ENCODE measurements at regions of chr11 and their contacts with region 1.

Region 1: DNA sequence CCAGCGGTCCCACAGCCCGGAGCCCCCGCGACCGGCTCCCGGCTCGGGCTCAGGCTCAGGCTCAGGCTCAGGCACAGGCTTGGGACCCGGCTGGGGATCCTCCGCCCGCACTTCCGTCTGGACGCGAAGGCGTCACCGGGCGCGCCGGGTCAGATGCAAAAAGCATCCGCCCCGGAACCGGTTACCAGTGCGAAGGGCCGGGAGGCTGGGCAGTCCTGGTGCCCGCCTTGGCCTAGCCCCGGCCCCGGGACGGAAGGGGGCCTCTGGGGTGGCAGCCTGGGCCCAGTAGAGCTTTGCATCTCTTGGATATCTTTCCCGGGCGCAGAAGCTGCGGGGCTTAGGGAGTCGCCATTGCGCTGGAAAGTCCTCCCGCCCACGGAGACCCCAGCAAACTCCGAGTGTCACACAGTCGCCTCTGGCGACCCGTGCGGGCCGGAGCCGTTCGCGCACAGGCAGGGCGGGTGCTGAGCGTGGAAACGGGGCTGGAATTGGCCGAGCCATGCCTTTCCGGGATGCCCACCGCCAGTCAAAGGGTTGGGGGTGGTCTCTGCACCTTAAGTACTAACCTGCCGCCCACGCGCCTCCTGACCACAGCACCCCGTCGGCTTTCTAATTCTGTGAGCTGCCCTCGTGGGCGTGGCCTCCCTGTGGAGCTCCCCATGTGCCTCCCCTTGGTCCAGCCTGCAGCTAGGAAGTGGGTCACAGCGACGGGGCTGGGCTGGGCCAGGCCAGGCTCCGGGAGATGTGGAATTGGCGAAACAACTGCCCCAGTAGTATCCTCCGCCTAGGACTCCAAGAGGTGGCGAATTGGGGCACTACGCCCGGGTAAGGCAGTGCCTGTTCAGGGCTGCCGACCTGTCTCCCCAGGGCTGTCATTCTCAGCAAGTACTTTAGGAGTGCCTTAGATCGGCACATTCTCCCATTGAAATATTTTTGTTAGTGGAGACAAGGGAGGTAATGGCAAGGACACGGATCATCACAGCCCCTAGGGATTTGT is at the start of gene TMEM9B:
- DNase-seq: peak; percentile 92
- H3K4me3 ChIP-seq: peak within 1 kb of the TSS; percentile 90 to 96 (median 95)
- H3K27ac ChIP-seq: peak within 1 kb of the TSS; percentile 86
- H3K4me1 ChIP-seq: peaks cover 23% of the 10 kb centered on the region
- H3K27me3 ChIP-seq: no peaks in the 10 kb centered on the region
- CTCF ChIP-seq: no peak
- total RNA-seq, gene TMEM9B: 37.8 to 52.7 TPM

Region 2: GRCh38 chr11:8459711-8460394 is 504.8 kb before region 1 on chr11:
- CTCF ChIA-PET with region 1: no interaction called
- dilution Hi-C with region 1: no loop called
- in situ Hi-C with region 1: no loop called
- intact Hi-C with region 1: no loop called
- DNase-seq: no peak
- H3K4me3 ChIP-seq: no peak overlapping the region
- H3K27ac ChIP-seq: no peak overlapping the region
- H3K4me1 ChIP-seq: no peaks in the 10 kb centered on the region
- H3K27me3 ChIP-seq: peaks cover 5% of the 10 kb centered on the region
- CTCF ChIP-seq: no peak

Region 3: DNA sequence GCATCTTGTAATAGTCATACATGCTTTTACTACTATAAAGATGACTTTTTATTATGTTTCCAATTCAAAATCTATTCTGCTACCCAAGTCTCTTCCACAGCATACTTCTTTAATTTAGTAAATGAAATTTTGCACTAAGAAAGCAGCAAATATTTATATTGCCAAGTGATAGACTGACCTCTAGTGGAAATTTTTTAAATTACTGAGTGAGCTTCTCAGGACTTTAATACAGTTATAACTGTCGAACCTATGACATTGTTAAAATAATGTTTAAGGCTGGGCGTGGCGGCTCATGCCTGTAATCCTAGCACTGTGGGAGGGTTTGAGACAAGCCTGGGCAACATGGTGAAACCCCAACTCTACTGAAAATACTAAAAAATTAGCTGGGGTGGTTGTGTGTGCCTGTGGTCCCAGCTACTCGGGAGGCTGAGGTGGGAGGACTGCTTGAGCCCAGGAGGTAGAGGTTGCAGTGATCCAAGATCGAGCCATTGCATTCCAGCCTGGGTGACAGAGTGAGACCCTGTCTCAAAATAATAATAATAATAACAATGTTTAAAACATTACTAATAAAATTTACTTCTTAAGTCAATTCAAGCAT is 397.9 kb before region 1 on chr11:
- CTCF ChIA-PET with region 1: interaction called, 4 read pairs
- dilution Hi-C with region 1: no loop called
- in situ Hi-C with region 1: no loop called
- intact Hi-C with region 1: loop called (anchors 1 kb)
- DNase-seq: peak; percentile 55
- H3K4me3 ChIP-seq: no peak overlapping the region
- H3K27ac ChIP-seq: peak overlapping the region; percentile 29
- H3K4me1 ChIP-seq: peaks cover 13% of the 10 kb centered on the region
- H3K27me3 ChIP-seq: no peaks in the 10 kb centered on the region
- CTCF ChIP-seq: peak; percentile 43 to 50

Region 4: DNA sequence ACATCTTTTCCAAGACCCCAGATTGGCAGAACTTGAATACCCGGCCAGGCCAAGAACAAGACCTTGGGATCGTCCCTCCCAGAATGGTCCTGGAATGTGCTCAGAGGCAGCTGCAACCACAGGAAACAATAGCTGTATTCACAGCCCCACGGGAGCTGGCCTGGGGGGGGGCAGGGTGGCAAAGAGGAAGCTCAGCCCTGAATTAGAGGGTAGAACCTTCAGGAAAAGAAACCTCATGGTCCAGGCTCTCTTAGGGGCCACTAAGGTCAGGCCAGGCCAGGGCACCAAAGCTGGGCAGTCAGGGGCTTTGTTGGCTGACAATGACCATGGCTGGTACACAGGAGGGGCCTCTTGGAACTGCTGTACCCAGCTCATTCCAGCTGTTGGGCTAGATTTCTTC is 264.7 kb before region 1 on chr11:
- CTCF ChIA-PET with region 1: no interaction called
- dilution Hi-C with region 1: no loop called
- in situ Hi-C with region 1: loop called in 1 of 2 experiments (anchors 10 kb)
- intact Hi-C with region 1: no loop called
- DNase-seq: peak; percentile 74
- H3K4me3 ChIP-seq: no peak overlapping the region
- H3K27ac ChIP-seq: peak overlapping the region; percentile 77
- H3K4me1 ChIP-seq: peaks cover 18% of the 10 kb centered on the region
- H3K27me3 ChIP-seq: no peaks in the 10 kb centered on the region
- CTCF ChIP-seq: no peak

Region 5: GRCh38 chr11:8870411-8871170 is 94.0 kb before region 1 on chr11:
- CTCF ChIA-PET with region 1: no interaction called
- dilution Hi-C with region 1: no loop called
- in situ Hi-C with region 1: no loop called
- intact Hi-C with region 1: loop called (anchors 5 kb)
- DNase-seq: peak; percentile 74
- H3K4me3 ChIP-seq: peak overlapping the region; percentile 49 to 78 (median 76)
- H3K27ac ChIP-seq: peak overlapping the region; percentile 6
- H3K4me1 ChIP-seq: peaks cover 13% of the 10 kb centered on the region
- H3K27me3 ChIP-seq: no peaks in the 10 kb centered on the region
- CTCF ChIP-seq: peak in 1 of 2 donors; percentile 16

Region 6: DNA sequence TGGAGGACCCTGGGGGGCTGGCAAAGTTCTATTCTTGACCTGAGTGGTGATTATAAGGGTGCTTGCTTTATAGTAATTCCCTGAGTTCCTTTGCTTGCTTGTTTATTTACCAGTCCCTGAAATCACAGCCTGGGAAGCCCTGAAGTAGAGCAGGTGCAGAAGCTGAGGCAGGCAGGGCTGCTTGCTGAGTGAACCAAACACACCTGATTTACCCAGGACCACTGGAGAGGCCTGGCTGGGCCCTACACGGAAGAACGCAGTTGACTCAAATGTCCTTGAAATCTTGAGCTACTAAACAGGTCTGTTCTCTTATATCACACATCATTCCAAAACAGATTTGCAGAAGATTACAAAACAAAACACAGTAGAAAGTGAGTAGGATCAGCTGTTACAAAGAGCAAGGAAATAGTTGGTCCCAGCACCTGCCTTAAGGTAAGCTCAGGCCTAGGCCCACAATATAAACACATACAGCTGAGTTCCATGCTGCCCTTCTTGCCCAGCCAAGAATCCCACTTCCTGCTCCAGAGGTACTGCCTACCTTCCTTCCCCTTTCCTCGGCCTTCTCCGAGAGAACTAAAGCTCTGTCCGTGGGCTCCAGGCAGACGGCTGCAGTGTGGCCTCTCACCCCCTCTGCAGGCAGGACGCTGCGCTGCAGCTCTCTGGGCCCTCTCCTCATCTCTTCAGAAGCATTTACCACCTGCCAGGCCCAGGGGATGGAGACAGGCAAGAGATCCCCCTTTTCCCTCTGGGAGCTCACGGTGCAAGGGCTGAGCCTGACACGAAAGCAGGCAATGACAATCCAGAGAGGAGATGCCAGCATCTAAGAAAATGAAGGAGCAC is 172.9 kb after region 1 on chr11:
- CTCF ChIA-PET with region 1: interaction called, 5 read pairs
- dilution Hi-C with region 1: no loop called
- in situ Hi-C with region 1: no loop called
- intact Hi-C with region 1: loop called (anchors 1 kb)
- DNase-seq: peak; percentile 68
- H3K4me3 ChIP-seq: no peak overlapping the region
- H3K27ac ChIP-seq: no peak overlapping the region
- H3K4me1 ChIP-seq: peaks cover 28% of the 10 kb centered on the region
- H3K27me3 ChIP-seq: no peaks in the 10 kb centered on the region
- CTCF ChIP-seq: peak; percentile 98 to 99